Heart left ventricle (tissue), 16 donors: ENCODE measurements at regions of chr10 and their contacts with region 1.

Region 1: DNA sequence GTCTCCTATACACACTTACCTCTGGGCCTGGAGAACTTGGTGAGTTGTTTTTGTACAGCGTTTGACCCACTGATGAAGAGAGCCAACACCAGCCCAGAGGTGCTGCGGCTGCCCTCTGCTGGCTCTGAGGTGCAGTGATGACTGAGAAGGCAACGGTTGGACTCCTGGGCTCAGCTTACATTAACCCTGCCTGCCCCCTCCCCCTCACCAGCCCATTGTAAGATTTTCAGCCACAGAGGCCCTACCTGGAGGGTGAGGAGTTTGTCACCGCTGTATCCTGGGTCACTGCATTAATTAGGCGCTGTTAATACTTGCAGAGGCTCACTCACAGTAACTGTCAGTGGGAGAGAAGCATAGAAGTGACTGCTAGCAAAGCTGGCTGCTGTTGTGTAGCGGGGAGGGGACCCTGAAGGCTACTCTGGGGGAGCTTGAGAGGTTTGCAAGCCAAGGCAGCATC is 19.0 kb upstream of the ANKRD2 start:
- DNase-seq: peak; percentile 69 to 79 (median 72)
- ATAC-seq: peak; percentile 87 to 91 (median 91)
- H3K4me3 ChIP-seq: no peak overlapping the region
- H3K27ac ChIP-seq: no peak overlapping the region
- H3K4me1 ChIP-seq: peaks cover 0 to 42% (median 26%) of the 10 kb centered on the region in 12 donors
- H3K27me3 ChIP-seq: no peaks in the 10 kb centered on the region
- CTCF ChIP-seq: peak; percentile 61 to 89 (median 80)
- POLR2A ChIP-seq: no peak

Region 2: DNA sequence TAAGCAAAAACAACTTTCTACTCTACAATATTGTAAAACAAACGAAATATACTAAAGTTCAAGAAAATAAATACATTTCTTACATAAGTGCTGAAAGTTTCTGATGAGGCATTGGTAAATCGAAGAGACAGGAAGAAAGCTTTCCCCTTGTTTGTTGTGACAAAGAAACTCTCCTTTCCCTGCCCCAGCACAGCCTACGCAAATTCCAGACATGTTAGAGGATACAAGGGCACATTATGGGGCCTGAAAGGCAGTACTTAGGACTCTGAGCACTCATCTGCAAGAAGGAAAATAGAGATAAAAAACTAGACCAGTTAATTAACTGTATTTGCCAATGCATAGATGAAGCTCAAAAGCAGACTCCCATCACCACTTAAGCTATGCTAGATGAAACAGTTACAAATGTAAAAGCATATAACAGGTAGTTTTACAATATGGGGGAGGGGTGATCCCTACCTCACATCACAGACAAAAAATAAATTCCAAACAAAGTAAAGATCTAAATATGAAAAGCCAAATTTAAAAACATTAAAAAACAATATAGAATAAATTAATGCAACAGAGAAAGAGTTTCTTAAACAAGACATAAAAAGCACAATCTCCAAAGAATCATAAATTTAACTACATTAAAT is 283.0 kb before region 1 on chr10:
- intact Hi-C with region 1: no loop called
- DNase-seq: no peak
- ATAC-seq: no peak
- H3K4me3 ChIP-seq: peak overlapping the region in 1 of 12 donors; percentile 6
- H3K27ac ChIP-seq: no peak overlapping the region
- H3K4me1 ChIP-seq: peaks cover 0 to 6% (median 0%) of the 10 kb centered on the region in 12 donors
- H3K27me3 ChIP-seq: no peaks in the 10 kb centered on the region
- CTCF ChIP-seq: no peak
- POLR2A ChIP-seq: no peak

Region 3: DNA sequence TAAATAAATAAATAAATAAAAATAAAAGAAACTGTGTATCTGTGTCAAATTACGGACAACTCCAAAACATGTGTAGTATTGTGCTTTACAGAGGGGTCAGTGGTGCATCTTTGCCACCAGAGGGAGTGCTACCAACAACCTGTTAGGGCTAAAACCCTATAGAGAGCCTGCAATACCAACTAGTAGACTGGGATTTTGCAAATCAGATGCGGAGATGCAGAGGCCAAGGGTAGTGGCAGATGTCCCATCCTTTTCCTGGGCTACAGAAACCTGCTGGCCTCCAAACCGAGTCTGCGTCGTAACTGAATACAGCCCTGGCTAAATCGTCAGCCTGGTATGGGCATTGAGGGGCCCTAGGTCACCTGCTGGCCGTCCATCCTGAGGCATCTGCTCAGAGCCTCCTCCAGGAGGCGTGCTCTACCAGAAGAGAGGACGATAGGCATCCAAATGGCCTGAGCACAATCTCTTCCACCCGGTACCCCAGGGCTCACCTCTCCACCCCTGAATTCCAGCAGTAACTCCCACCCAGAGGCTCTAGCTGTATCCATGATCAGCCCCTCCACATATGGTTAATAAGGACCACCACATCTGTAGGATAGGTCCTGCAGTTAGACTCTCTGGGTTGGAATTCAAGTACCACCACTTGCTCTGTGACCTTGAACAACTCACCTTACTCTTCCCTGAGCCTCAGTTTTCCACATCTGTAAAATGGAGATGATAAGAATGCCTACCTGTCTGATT is 146.2 kb before region 1 on chr10:
- intact Hi-C with region 1: loop called in 1 of 10 experiments (anchors 5 kb)
- DNase-seq: peak in 4 of 5 donors; percentile 47 to 51 (median 48)
- ATAC-seq: peak; percentile 81 to 91 (median 88)
- H3K4me3 ChIP-seq: peak overlapping the region in 2 of 12 donors; percentile 18 to 26
- H3K27ac ChIP-seq: peak overlapping the region in 2 of 12 donors; percentile 16 to 69
- H3K4me1 ChIP-seq: peaks cover 0 to 28% (median 6%) of the 10 kb centered on the region in 12 donors
- H3K27me3 ChIP-seq: no peaks in the 10 kb centered on the region
- CTCF ChIP-seq: peak; percentile 76 to 91 (median 82)
- POLR2A ChIP-seq: no peak

Region 4: DNA sequence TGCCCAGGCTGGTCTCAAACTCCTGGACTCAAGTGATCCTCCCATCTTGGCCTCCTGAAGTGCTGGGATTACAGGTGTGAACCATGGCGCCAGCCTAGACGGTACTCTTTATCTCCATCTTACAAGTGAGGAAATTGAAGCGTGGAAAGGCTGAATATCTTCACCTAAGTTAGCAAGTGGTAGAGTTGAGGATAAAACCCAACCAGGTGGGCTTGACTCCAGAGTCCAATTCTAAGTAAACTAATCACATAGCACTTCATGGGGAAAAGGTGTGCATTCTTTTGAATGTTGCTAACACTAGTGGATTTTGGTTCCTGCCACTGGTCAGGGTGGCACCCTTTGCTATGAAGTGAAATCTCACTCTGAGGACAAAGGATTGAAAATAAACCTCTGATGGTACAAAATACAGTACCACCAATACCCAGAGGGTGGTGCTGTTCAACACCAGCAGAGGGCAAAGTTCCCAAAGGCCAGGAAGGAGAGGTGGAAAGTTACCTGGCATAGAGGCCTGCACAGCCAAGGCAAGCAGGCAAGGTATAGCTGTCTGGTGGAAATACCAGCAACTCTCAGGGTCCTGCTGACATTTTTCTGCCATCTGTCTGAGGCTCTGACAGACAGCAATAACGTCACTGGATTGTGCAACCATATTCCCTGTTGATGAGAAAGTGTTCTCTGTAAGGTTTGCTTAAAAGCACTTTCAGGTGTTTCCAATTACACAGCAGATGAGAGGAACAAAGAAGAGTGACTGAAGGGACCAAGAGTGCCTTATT is 90.1 kb before region 1 on chr10:
- intact Hi-C with region 1: loop called (anchors 1 to 5 kb)
- DNase-seq: peak in 2 of 5 donors; percentile 28 to 35
- ATAC-seq: peak in 3 of 4 donors; percentile 54 to 68 (median 64)
- H3K4me3 ChIP-seq: no peak overlapping the region
- H3K27ac ChIP-seq: peak overlapping the region in 7 of 12 donors; percentile 18 to 40 (median 32)
- H3K4me1 ChIP-seq: peaks cover 0 to 18% (median 0%) of the 10 kb centered on the region in 12 donors
- H3K27me3 ChIP-seq: no peaks in the 10 kb centered on the region
- CTCF ChIP-seq: peak; percentile 70 to 92 (median 78)
- POLR2A ChIP-seq: no peak

Region 5: DNA sequence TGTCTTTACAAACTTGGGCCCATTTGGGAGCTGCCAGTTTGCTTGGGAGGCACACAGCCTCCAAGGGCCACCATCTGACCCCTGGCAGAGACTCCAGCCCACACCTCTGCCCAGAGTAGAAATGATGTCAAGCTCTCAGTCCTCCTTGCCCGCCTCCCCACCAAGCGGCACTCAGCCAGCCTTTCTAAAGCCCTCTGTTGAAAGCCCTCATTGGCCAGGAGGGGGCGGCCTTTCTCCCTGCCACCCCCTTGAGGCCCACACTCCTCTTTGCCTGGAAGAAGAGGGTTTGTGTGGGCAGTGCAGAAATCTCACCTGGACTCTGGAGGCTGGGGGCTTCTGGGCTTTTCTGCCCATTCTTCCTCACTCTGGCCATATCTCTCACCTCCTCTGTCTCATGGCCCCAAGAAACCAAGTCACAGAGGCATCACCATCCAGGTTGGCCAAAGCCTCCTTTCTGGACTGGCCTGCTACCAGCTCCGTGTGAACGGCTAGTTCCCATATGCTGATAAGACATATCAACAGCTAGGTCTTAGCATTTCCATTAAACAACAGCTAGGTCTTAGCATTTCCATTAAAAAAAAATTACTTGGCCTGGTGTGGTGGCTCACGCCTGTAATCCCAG is 18.7 kb before region 1 on chr10:
- intact Hi-C with region 1: loop called in 1 of 10 experiments (anchors 2 kb)
- DNase-seq: peak in 1 of 5 donors; percentile 22
- ATAC-seq: peak in 3 of 4 donors; percentile 30 to 45 (median 31)
- H3K4me3 ChIP-seq: no peak overlapping the region
- H3K27ac ChIP-seq: no peak overlapping the region
- H3K4me1 ChIP-seq: peaks cover 0 to 16% (median 8%) of the 10 kb centered on the region in 12 donors
- H3K27me3 ChIP-seq: no peaks in the 10 kb centered on the region
- CTCF ChIP-seq: peak in 9 of 12 donors; percentile 11 to 56 (median 48)
- POLR2A ChIP-seq: no peak